GM10248 (cell line): ENCODE measurements at regions of chr4 and their contacts with region 1.

Region 1: DNA sequence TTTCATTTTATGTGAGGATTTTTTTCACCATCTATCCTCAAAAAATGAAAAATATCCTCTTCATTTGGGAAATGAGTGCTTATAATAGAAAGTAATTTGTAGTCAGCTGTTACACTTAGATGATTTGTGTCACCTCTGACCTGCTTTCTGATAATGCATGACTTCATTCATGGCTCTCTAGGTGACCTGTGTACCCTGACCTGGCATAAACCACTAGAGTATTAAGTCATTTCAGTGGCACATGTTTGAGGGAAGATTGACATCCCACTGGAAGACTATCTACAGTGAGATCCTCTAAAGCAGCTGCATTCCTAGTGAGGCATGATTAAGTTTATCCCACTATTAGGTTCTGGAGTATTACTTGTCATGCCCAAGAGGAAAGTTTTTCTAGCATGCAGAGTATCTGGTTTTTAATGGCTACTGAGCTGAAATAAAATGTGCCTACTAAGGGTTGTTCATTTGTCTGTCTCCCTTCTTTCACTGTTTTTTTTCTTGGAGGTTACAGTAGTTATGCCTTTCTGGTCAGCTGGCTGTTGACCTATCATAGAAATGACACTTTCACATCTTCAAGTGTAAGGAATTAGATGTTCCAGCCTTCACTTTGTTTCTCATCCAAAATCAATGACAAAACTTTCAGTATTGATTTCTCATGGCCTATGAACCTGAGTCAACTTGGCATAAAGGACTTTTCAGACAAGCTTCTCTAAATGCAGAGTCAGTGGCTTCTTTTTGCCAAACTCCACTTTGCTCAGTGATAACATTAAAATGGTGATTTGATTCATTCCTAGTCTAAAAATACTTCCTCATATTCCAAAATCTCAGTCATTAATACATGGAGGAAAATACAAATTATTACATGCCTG is 33.1 kb downstream of the TET2 start:
- DNase-seq: no peak
- CTCF ChIP-seq: no peak

Region 2: GRCh38 chr4:105196523-105197145 is 16.9 kb after region 1 on chr4:
- CTCF ChIA-PET with region 1: interaction called, 11 read pairs
- POLR2A ChIA-PET with region 1: no interaction called
- DNase-seq: no peak
- CTCF ChIP-seq: no peak